Activated T-helper 2 cell treated with anti-CD3 and anti-CD28 coated beads, Interferon-gamma antibody, Interleukin-2, Interleukin-4, amounts not matched to agents 10 μg/mL and 5 μg/mL and 100 μg/mL, durations not matched to agents 14 hours and 24 hours and 36 hours (primary cell): ENCODE measurements at regions of chr10 and their contacts with region 1.

Region 1: DNA sequence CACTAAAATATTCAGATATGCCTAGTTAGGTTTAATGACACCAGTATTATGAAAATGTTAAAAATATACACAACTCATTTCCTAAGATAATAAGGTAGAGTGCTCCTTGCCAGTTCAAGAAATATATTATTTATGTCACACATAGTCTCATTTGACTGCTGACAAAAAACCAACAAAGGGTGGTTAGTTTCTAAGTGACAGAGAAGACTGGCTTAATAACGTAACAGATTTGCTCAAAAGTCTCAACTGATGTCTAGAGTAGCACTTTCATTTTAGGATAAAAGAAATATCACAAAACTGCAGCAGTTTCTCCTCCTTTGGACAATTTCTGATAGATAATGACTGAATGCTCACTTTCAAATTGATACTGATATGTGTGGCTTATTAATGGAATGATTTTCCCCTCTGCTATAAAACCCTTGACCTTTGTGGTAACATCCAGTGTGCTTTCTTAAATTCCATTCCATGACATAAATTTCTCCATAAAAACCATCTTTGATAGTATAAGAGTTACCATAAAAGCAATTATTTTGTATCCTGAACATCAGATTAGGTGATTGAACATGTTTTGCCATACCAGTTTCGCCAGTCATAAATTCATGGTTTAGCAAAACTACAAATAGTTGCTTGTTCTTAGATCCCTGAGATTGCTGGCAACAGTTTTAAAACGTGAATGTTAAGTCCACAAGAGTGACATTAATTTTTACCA is 94.2 kb downstream of the NRBF2 start:
- DNase-seq: no peak
- H3K4me3 Mint-ChIP-seq: peak overlapping the region; percentile 41
- H3K27ac Mint-ChIP-seq: peak overlapping the region; percentile 74
- H3K4me1 Mint-ChIP-seq: peaks cover 34% of the 10 kb centered on the region
- H3K27me3 Mint-ChIP-seq: no peaks in the 10 kb centered on the region

Region 2: DNA sequence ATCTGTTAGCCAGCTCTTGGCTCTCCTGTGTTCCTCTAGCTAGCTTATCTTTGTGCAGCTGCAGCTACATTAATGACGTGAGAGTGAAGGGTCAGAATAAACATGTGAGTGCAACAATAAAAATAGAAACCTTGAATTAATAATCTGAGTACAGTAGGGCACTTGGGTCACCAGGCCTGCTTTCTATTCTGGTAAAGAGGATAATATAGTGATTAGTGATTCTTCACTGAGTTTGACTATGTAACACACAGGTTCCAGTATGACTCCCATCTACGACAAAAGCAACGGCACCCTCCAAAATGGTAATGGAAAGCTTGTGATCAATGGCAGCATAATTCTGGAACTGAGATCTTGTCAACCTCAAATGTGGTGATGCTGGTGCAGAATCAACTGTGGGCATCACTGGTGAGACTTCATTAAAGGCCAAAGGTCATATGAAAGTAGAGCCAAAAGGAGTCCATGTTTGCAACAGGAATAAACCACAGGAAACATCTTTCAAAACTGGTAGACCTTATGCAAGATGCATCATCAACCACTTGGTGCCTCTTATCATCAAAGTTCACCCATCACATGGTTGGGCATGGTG is 16.7 kb before region 1 on chr10:
- intact Hi-C with region 1: loop called (anchors 2 kb)
- DNase-seq: no peak
- H3K4me3 Mint-ChIP-seq: no peak overlapping the region
- H3K27ac Mint-ChIP-seq: peak overlapping the region; percentile 50
- H3K4me1 Mint-ChIP-seq: peaks cover 44% of the 10 kb centered on the region
- H3K27me3 Mint-ChIP-seq: no peaks in the 10 kb centered on the region

Region 3: DNA sequence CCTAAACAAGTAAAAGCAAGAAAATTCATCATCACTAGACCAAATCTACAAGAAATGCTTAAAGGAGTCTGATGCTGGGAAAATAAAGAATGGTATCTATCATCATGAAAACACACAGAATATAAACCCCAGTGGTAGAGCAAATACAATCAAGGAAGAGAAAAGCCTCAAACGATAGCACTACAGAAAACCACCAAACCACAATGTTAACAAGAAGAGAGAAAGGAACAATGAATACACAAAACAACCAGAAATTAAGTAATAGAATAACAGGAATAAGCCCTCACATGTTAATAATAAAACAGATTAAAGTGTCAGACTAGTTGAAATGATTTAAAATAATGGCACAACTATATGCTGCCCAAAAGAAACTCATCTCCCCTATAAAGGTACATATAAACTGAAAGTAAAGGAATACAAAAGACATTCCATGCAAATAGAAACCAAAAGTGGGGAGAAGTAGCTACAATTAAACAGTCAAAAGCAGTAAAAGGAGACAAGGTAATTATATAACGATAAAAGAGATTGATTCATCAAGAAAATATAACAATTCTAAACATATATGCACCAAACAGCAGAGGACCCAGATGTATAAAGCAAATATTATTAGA is 161.2 kb after region 1 on chr10:
- intact Hi-C with region 1: loop called (anchors 10 kb)
- DNase-seq: no peak
- H3K4me3 Mint-ChIP-seq: peak overlapping the region; percentile 61
- H3K27ac Mint-ChIP-seq: peak overlapping the region; percentile 45
- H3K4me1 Mint-ChIP-seq: peaks cover 42% of the 10 kb centered on the region
- H3K27me3 Mint-ChIP-seq: peaks cover 2% of the 10 kb centered on the region

Region 4: GRCh38 chr10:63430097-63430998 is 203.0 kb after region 1 on chr10:
- intact Hi-C with region 1: no loop called
- DNase-seq: no peak
- H3K4me3 Mint-ChIP-seq: no peak overlapping the region
- H3K27ac Mint-ChIP-seq: no peak overlapping the region
- H3K4me1 Mint-ChIP-seq: peaks cover 13% of the 10 kb centered on the region
- H3K27me3 Mint-ChIP-seq: no peaks in the 10 kb centered on the region

Region 5: GRCh38 chr10:63465293-63466143 is 238.2 kb after region 1 on chr10 and contains the start of gene JMJD1C:
- intact Hi-C with region 1: loop called (anchors 5 kb)
- DNase-seq: peak; percentile 47
- H3K4me3 Mint-ChIP-seq: peak within 1 kb of the TSS; percentile 91
- H3K27ac Mint-ChIP-seq: peak within 1 kb of the TSS; percentile 58
- H3K4me1 Mint-ChIP-seq: peaks cover 12% of the 10 kb centered on the region
- H3K27me3 Mint-ChIP-seq: peaks cover 32% of the 10 kb centered on the region
- total RNA-seq, gene JMJD1C: 33.8 and 35.2 TPM in 2 replicates

Region 6: DNA sequence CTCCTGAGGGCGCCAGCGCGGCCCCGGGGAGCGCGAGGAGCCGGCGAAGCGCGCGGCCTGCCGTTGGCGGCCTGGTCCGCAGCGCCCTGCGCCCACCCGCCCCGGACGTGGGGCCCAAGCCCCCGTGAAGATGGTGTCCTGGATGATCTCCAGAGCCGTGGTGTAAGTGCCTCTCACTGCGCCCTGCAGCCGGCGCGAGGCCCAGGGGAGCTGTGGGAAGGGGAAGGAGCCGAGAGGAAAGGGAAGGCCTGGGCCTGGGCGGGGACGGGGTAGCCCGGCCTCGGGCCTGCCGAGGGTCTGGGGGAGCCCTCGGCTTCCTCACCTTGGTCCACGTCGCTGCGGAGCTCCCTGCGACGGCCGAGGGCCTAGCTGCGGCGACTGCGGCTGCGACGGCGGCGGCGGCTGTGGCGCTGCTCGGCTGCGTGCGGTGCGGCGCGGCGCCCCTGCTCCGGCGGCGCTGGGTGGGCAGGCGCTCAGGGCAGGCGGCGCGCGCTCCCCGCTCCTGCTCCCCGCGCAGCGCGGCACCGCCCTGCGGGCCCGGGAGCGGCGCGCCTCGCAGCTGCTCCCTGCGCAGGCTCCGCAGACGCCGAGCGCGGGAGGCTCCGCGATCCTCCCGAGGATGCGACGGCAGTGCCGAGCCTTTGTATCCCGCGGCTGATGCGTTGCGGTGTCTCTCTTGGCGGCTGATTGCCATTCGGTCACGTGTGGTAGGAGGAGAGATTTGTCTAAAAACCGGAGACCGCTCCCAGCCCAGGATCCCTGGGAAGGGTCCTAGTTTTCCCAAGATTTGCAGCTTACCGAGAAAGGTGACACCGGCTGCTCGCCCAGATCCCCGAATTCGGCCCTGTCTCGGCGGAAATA is 294.3 kb after region 1 on chr10:
- intact Hi-C with region 1: loop called (anchors 5 kb)
- DNase-seq: peak; percentile 42
- H3K4me3 Mint-ChIP-seq: peak overlapping the region; percentile 79
- H3K27ac Mint-ChIP-seq: peak overlapping the region; percentile 81
- H3K4me1 Mint-ChIP-seq: peaks cover 51% of the 10 kb centered on the region
- H3K27me3 Mint-ChIP-seq: no peaks in the 10 kb centered on the region